ENCODE measurements at regions of chr7 and their contacts with region 1.

Region 1: DNA sequence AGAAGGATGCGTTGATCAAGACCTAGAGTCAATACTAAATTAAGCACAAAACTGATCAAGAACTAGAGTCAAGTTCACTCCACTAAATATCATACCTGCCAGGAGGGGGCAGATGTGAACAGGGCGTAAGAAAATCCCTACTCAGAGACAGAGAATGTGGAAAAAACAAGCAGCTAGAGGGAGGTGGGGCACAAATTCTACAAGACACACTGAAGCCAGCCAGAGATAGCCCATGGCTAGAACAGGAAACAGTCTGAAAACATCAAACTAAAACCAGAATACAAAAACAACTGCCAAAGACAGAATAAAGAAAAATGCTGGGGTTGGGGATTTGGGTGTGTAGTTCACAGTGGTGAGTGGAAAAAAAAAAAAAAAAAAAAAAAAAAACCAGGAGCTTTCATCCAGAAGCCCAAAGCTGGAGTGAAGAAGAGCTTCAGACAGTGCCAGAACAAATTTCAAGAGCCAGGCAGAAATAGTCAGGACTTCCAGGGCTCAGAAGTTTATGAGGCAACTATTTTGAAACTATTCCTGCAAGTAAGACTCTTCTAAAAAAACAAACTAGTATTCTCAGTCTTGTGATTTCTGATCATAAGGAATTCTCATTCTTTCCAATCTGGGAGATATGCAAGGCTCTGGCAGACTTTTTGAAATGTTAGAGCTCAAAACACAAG is 118.3 kb downstream of the CCDC71L start:
- DNase-seq: no peak
- ATAC-seq: peak; percentile 90
- H3K4me3 Mint-ChIP-seq: no peak overlapping the region
- H3K27ac Mint-ChIP-seq: no peak overlapping the region
- H3K4me1 Mint-ChIP-seq: peaks cover 4% of the 10 kb centered on the region
- H3K27me3 Mint-ChIP-seq: peaks cover 2% of the 10 kb centered on the region
- CTCF ChIP-seq: no peak

Region 2: DNA sequence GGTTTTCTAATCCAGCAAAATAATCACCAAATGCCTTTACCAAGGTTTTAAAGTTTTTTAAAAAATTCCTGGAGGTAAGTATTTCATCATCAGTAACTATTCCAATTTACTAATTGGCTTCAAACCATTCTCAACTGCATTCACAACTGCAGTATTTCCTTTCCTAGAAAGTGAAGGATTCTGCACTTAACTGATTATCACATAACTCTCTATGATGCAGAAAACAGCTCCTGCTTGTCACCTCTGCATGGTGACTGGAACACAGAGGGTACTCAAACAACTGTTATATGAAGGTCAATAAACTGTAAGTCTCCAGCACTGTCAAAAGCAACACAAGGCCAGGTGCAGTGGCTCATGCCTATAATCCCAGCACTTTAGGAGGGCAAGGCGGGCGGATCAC is 1196.5 kb before region 1 on chr7:
- CTCF ChIA-PET with region 1: no interaction called
- POLR2A ChIA-PET with region 1: interaction called, 10 read pairs
- intact Hi-C with region 1: no loop called
- DNase-seq: no peak
- ATAC-seq: peak; percentile 18
- H3K4me3 Mint-ChIP-seq: no peak overlapping the region
- H3K27ac Mint-ChIP-seq: peak overlapping the region; percentile 76
- H3K4me1 Mint-ChIP-seq: peaks cover 74% of the 10 kb centered on the region
- H3K27me3 Mint-ChIP-seq: no peaks in the 10 kb centered on the region
- CTCF ChIP-seq: no peak

Region 3: GRCh38 chr7:106176414-106177299 is 366.0 kb before region 1 on chr7:
- CTCF ChIA-PET with region 1: interaction called, 5 read pairs
- POLR2A ChIA-PET with region 1: no interaction called
- intact Hi-C with region 1: loop called (anchors 1 kb)
- DNase-seq: peak; percentile 64
- ATAC-seq: peak; percentile 91
- H3K4me3 Mint-ChIP-seq: no peak overlapping the region
- H3K27ac Mint-ChIP-seq: no peak overlapping the region
- H3K4me1 Mint-ChIP-seq: peaks cover 11% of the 10 kb centered on the region
- H3K27me3 Mint-ChIP-seq: peaks cover 4% of the 10 kb centered on the region
- CTCF ChIP-seq: peak; percentile 41

Region 4: GRCh38 chr7:106294337-106294736 is 248.3 kb before region 1 on chr7:
- CTCF ChIA-PET with region 1: no interaction called
- POLR2A ChIA-PET with region 1: no interaction called
- intact Hi-C with region 1: no loop called
- DNase-seq: no peak
- ATAC-seq: no peak
- H3K4me3 Mint-ChIP-seq: no peak overlapping the region
- H3K27ac Mint-ChIP-seq: no peak overlapping the region
- H3K4me1 Mint-ChIP-seq: no peaks in the 10 kb centered on the region
- H3K27me3 Mint-ChIP-seq: no peaks in the 10 kb centered on the region
- CTCF ChIP-seq: no peak

Region 5: GRCh38 chr7:106520962-106521940 is 21.4 kb before region 1 on chr7:
- CTCF ChIA-PET with region 1: no interaction called
- POLR2A ChIA-PET with region 1: no interaction called
- intact Hi-C with region 1: no loop called
- DNase-seq: no peak
- ATAC-seq: no peak
- H3K4me3 Mint-ChIP-seq: no peak overlapping the region
- H3K27ac Mint-ChIP-seq: no peak overlapping the region
- H3K4me1 Mint-ChIP-seq: no peaks in the 10 kb centered on the region
- H3K27me3 Mint-ChIP-seq: peaks cover 23% of the 10 kb centered on the region
- CTCF ChIP-seq: no peak

Region 6: DNA sequence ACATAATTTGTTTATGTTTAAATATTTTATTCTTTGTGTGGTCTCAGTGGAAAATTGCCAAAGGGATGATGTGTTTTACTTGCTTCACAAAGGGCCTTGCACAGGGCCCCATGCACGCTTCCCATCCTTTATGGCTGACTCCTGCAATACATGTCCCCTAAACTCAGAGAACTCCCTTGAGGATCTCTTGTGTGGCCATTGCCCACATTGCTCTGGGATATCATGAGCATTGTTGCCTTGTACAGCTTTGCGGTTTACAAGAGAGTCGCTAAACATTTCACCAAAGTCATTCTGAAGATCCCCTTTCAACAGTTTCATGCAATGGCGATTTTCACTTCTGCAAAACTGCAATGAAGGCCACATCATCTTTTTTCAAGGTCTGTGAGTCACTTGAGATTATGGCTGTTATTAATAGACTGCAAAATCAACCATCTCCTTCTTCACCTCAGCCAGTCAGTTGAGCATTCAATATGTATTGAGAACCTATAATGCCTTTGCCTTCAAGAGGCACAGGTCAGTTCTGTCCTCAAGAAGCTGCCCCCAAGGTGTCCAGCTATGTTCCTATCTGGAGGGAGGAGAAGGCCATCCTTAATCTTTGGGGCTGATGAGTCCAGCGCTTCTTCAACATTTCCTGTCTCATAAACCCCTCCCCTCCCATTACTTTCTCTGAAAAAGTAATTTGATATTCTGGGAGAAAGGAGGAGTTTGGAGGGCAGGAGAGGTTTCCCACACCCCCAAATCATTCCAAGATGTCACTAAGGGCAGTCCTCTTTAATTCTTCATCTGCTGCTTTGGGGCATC is 10.2 kb after region 1 on chr7:
- CTCF ChIA-PET with region 1: interaction called, 16 read pairs
- POLR2A ChIA-PET with region 1: interaction called, 3 read pairs
- intact Hi-C with region 1: loop called (anchors 1 kb)
- DNase-seq: peak; percentile 27
- ATAC-seq: peak; percentile 92
- H3K4me3 Mint-ChIP-seq: peak overlapping the region; percentile 39
- H3K27ac Mint-ChIP-seq: peak overlapping the region; percentile 89
- H3K4me1 Mint-ChIP-seq: peaks cover 39% of the 10 kb centered on the region
- H3K27me3 Mint-ChIP-seq: no peaks in the 10 kb centered on the region
- CTCF ChIP-seq: no peak

Region 7: DNA sequence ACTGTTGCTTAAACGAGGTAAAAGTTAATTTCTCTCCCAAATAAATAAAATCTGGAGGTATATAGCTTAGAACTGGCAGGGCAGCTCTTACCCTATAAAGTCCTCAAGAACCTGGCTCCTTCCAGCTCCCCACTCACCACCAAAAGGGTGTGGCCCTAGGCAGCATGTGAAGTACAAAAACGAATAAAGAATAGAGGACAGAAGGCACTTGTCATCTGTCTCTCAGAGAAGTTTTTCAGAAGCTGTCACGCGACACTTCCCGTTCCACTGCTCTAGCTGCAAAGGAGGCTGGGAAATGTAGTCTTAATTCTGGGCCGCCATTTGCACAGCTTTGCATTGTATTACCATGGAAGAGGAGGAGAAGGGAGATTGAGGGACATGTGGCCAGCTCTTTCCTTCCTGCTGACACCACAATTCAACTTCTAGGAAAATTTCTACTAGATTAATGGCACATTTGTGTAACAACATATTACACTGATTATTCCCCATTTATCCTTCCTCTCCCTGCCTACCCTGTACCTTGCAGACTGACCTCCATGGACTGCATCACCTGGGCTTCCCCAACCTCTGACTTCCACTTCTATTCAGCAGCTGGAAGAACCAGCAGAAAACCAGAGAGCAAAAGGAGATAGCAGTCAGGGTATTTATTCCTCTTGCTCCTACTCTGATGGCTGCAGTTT is 56.1 kb after region 1 on chr7:
- CTCF ChIA-PET with region 1: interaction called, 6 read pairs
- POLR2A ChIA-PET with region 1: no interaction called
- intact Hi-C with region 1: loop called (anchors 1 kb)
- DNase-seq: peak; percentile 34
- ATAC-seq: peak; percentile 100
- H3K4me3 Mint-ChIP-seq: peak overlapping the region; percentile 52
- H3K27ac Mint-ChIP-seq: peak overlapping the region; percentile 68
- H3K4me1 Mint-ChIP-seq: peaks cover 6% of the 10 kb centered on the region
- H3K27me3 Mint-ChIP-seq: no peaks in the 10 kb centered on the region
- CTCF ChIP-seq: no peak

Region 8: DNA sequence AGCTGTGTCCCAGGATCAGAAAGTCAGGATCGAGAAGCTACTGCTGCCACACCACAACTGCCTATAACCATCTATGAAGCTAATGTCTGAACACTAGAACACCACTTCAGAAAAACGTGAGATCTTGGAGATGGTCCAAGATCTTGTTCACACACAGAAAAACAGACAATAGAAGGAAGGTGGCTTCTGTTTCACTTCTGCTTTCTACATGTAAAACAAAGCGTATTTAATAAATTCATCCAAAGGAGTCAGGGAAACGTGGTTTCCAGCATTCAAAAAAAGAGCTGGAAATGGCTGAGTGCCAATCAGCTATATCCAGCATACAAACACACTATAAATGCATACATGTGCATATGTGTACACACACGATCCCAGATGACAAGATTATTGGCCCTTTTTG is 188.5 kb after region 1 on chr7:
- CTCF ChIA-PET with region 1: interaction called, 166 read pairs
- POLR2A ChIA-PET with region 1: interaction called, 17 read pairs
- intact Hi-C with region 1: loop called (anchors 1 kb)
- DNase-seq: no peak
- ATAC-seq: peak; percentile 77
- H3K4me3 Mint-ChIP-seq: peak overlapping the region; percentile 13
- H3K27ac Mint-ChIP-seq: no peak overlapping the region
- H3K4me1 Mint-ChIP-seq: peaks cover 31% of the 10 kb centered on the region
- H3K27me3 Mint-ChIP-seq: no peaks in the 10 kb centered on the region
- CTCF ChIP-seq: no peak

Measured in activated B cell treated with CpG ODN at 0.5 μM for 24 hours (primary cell).